HEK293 (cell line): ENCODE measurements at regions of chr1 and their contacts with region 1.

Region 1: GRCh38 chr1:240888039-240888786 is 276.3 kb upstream of the GREM2 start:
- H3K4me3 ChIP-seq: no peak overlapping the region
- H3K27ac ChIP-seq: no peak overlapping the region
- H3K4me1 ChIP-seq: no peaks in the 10 kb centered on the region
- CTCF ChIP-seq: peak; percentile 87

Region 2: GRCh38 chr1:240866724-240867123 is 21.5 kb before region 1 on chr1:
- CTCF ChIA-PET with region 1: interaction called, 10 read pairs
- POLR2A ChIA-PET with region 1: no interaction called
- H3K4me3 ChIP-seq: no peak overlapping the region
- H3K27ac ChIP-seq: no peak overlapping the region
- H3K4me1 ChIP-seq: no peaks in the 10 kb centered on the region
- CTCF ChIP-seq: no peak